Activated naive CD4-positive, alpha-beta T cell treated with anti-CD3 and anti-CD28 coated beads for 36 hours (primary cell): ENCODE measurements at regions of chr20 and their contacts with region 1.

Region 1: DNA sequence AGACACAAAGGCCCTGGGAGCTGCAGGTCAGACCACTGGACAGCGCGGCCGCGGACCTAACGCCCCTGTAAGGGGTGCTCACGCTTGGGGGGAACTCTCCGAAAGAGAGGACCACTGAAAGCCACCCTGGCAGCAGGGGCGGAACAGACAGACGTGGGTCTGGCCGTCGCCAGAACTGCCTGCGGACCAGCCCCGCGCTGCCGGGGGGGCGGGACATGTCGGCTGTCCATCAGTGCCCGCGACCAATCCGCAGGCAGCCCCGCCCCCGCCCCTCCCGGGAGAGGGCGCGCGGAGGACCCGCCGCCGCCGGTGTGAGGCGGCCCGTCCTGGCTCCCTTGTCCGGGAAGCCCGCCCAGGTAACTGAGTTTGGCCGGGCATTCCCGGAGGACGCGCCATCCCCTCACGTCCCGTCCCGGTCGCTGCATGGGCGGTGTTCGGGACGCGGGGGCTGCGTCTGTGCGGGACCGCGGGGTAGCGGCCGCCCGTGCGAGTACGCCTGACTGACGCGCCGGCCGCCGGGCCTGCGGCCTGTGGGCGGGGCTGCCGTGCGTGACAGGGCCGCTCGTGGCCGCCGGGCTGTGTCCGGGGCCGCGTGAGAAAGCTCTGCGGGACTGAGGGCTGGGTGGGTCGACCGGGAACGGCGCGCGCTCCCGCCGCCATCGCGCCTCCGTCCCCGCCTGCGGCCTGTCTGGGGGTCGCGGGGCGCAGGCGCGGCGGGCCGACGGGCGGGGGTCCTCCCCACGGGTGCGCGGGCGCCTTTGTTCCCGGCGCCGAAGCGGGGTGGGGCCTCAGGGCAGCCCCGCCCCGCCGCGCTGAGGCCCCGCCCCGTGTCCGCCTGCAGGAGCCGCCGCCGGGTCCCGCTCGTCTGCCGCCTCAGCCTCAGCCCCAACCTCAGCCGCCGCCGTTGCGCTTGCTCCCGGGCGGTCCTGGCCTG is at the start of gene PLCG1:
- DNase-seq: peak; percentile 86
- H3K4me3 Mint-ChIP-seq: peak within 1 kb of the TSS; percentile 85
- H3K27ac Mint-ChIP-seq: peak within 1 kb of the TSS; percentile 94
- H3K4me1 Mint-ChIP-seq: peaks cover 63% of the 10 kb centered on the region
- H3K27me3 Mint-ChIP-seq: no peaks in the 10 kb centered on the region
- total RNA-seq, gene PLCG1: 117 to 136 TPM

Region 2: DNA sequence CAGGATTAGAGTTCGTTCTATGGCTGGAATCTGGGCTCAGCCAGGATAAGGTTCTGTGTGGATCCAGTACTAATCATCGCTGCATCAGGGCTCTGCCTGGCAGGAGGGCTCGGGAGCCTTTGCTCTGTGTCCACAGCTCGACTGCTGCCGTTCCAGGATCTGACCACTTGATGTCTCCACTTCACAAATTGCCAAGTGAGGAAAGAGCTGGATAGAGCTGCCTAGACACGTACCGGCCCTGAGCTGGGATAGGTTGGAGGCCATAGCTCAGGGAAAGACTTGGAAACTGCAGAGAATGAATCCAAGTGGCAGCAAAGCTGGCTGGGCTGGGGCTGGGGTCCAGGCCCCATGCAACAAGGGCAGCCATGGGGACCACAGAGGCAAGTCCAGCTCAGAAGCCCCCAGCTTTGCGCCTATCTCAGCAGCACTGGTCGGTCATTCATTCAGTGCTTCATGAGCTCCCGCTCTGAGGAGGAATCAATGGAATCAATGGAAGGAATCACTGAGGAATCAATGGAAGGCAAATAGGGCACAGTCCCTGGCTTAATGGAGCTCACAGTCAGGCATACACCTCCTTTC is 146.3 kb before region 1 on chr20:
- CTCF ChIA-PET with region 1: interaction called, 12 read pairs
- intact Hi-C with region 1: no loop called
- DNase-seq: peak; percentile 89
- H3K4me3 Mint-ChIP-seq: no peak overlapping the region
- H3K27ac Mint-ChIP-seq: peak overlapping the region; percentile 72
- H3K4me1 Mint-ChIP-seq: peaks cover 21% of the 10 kb centered on the region
- H3K27me3 Mint-ChIP-seq: no peaks in the 10 kb centered on the region

Region 3: DNA sequence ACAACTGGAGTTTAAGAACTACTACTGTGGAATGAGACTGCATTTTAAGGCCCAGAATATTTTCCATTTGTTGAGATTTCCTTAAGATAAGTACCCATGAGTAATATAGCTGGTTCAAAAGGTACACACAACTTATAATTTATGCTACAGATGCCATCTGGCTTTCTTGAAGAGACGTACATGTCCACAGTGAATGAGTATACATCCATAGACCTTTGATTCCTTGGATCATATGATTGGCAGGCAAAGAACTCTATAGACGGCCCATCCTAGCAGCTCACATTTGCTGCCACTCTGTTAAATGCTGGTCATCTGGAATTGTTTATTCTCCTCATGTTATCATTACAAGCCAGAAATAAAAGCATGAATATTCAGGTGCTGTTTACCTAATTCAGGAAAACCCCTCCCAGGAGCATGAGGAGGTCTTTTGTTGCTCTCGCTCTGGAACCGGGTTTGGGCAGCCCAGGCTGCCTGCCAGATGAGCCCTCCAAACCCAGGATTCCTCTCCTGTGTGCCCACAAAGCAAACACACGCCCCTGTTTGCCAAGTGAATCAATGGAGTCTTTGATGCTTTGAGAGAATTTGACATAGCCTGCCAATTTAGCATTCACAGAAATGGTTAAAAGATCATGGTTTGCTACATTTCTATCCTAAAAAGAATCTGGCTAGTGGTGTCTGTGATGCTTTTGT is 17.3 kb before region 1 on chr20:
- CTCF ChIA-PET with region 1: interaction called, 18 read pairs
- intact Hi-C with region 1: no loop called
- DNase-seq: no peak
- H3K4me3 Mint-ChIP-seq: no peak overlapping the region
- H3K27ac Mint-ChIP-seq: no peak overlapping the region
- H3K4me1 Mint-ChIP-seq: no peaks in the 10 kb centered on the region
- H3K27me3 Mint-ChIP-seq: no peaks in the 10 kb centered on the region

Region 4: GRCh38 chr20:41161886-41162285 is 24.9 kb after region 1 on chr20:
- CTCF ChIA-PET with region 1: interaction called, 77 read pairs
- intact Hi-C with region 1: loop called (anchors 1 kb)
- DNase-seq: no peak
- H3K4me3 Mint-ChIP-seq: no peak overlapping the region
- H3K27ac Mint-ChIP-seq: peak overlapping the region; percentile 67
- H3K4me1 Mint-ChIP-seq: peaks cover 59% of the 10 kb centered on the region
- H3K27me3 Mint-ChIP-seq: no peaks in the 10 kb centered on the region

Region 5: DNA sequence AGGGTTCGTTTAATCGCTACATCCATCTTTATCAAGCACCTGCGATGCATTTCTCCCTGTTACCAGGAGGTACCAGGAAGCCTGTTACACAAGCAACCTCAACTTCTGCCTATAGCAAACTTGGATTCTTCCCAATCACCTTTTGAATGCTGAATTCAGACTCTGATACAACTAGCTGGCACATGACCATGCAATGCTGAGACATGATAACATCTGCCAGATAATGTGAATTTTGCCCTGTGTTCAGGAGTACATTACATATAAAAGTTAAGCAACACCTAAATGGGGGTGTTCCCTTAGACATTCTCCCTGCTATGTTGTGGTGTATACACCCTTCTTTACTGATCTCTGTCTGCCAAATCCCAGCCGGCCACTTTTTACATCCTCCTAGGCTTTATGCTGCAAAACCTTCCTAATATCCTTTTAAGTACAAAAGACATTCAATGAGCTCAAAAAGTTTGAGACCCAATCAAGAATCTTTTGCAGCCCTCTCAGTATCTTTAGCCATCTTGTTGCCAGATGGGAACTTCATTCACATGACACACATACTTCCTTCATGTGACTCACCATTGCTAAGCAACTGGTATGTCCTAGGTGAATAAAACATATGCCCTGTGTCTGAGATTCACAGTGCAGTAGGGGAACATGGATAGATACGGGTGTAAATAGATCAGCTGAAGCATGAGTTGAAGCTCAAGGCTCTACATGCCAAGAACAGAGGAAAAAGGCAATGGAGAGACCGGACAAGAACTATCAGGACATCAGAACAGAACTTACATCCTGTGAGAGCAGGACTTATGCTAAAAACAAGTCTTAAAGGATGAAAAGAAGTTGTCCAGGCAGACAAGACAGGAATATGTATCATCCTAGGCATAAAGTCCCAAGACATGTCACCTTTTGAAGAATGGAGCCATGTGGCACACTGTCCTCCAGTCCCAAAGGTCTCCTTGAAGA is 96.3 kb after region 1 on chr20:
- CTCF ChIA-PET with region 1: interaction called, 37 read pairs
- intact Hi-C with region 1: loop called (anchors 1 kb)
- DNase-seq: no peak
- H3K4me3 Mint-ChIP-seq: no peak overlapping the region
- H3K27ac Mint-ChIP-seq: no peak overlapping the region
- H3K4me1 Mint-ChIP-seq: peaks cover 24% of the 10 kb centered on the region
- H3K27me3 Mint-ChIP-seq: no peaks in the 10 kb centered on the region

Region 6: GRCh38 chr20:41339507-41340326 is 202.8 kb after region 1 on chr20:
- CTCF ChIA-PET with region 1: interaction called, 55 read pairs
- intact Hi-C with region 1: loop called (anchors 1 kb)
- DNase-seq: peak; percentile 87
- H3K4me3 Mint-ChIP-seq: peak overlapping the region; percentile 73
- H3K27ac Mint-ChIP-seq: no peak overlapping the region
- H3K4me1 Mint-ChIP-seq: peaks cover 11% of the 10 kb centered on the region
- H3K27me3 Mint-ChIP-seq: peaks cover 2% of the 10 kb centered on the region

Region 7: DNA sequence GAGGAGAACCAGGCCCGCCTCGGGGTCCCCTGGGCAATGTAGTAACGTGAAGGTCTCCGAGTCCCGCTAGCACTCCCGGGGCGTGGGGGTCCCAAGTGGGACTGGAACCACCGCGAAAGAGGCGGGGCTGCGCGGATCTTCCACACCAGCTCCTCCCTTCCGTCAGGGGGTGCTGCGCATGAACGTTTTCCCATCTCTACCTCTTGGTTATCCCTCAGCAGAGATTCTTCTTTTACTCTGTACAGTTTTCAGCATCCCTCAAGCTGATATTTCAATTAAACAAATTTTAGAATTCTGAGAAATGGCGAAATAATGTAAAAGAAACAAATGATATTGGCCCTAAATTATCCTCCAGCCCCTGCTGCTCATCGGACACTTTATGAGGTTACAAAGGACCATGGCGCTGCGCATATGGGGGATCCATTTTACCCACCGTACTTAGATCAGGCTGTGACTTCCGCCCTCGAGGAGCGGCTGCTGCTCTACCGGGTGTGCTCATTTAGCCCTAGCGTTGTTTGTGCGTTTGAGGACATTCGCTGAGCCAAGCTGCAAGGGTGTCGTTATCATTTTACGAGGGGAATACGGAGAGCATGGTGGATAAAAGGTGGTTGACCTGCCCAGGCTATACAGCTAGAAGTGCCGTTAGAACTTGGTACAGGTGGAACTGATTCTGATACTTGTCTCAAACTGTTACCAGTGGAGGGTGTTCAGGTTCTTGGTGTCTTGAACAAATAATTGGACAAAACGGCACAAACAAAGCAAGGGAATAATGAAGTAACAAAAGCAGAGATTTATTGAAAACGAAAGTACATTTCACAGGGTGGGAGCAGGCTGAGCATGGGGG is 556.4 kb after region 1 on chr20:
- CTCF ChIA-PET with region 1: no interaction called
- intact Hi-C with region 1: loop called (anchors 2 kb)
- DNase-seq: peak; percentile 86
- H3K4me3 Mint-ChIP-seq: peak overlapping the region; percentile 85
- H3K27ac Mint-ChIP-seq: peak overlapping the region; percentile 91
- H3K4me1 Mint-ChIP-seq: peaks cover 16% of the 10 kb centered on the region
- H3K27me3 Mint-ChIP-seq: peaks cover 2% of the 10 kb centered on the region

Region 8: DNA sequence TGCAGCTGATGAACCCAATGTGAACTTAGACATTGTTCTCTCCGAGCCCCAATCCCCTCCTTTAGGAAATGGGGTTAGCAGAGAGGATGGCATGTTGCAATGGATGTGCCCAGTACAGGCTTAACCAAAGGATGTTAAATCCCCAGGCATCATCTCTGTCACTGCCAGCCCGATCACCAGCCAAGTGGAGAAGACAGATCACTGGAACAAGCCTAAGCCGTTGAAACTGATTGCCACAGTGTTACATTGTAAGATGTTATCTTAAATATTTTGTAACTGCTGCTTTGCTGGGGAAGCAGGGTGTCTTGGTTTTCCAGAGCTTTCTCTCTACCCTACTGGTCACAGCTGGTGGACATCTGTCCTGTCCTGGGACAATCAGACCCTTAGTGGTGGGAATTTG is 1264.7 kb after region 1 on chr20:
- CTCF ChIA-PET with region 1: no interaction called
- intact Hi-C with region 1: no loop called
- DNase-seq: no peak
- H3K4me3 Mint-ChIP-seq: no peak overlapping the region
- H3K27ac Mint-ChIP-seq: no peak overlapping the region
- H3K4me1 Mint-ChIP-seq: no peaks in the 10 kb centered on the region
- H3K27me3 Mint-ChIP-seq: no peaks in the 10 kb centered on the region